PC-9 (cell line): ENCODE measurements at regions of chr10 and their contacts with region 1.

Region 1: DNA sequence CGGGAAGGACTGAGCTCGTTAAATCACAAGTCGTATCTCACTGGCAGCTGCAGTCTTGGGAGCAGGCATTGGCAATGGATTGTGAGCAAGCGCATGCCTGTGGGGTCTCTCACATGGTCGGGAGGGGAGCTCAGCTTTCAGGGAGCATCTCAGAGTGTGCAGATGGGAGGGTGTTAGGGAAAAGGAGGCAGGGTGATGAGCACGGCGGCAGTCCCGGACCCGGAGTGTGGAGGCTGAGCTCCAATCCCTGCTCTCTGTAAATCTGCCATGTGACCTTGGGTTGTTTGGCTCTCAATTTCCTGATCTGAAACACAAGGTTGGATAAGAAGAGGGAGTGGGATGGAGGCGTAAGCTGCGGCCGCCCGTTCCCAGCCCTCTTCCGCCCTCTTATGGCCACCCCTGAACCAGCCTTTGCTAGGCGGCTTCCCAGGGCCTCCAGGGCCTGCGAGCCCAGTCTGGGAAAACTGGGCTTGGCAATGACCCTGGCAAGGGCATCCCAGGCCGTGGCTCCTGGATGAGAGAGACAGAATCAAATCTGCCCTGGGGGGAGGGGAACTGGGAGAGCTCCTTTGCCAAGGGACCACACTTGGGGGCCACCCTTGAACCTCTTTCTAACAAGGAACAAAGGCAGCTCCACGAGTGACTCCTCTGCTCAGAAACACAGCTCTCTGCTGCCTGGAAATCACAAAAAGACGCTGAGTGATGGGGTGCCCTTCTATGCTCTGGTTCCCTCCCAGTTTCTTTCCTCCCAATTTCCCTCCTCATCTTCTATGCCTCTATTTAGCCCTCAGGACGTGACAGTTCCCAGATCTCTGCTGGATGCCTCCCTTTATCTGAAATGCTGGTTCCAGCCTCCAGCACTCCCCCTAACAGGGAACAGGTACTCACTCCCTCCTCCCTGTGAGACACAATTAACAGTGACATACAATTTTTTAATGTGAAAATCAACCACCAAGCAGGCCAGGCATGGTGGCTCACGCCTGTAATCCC is 41.7 kb upstream of the LOXL4 start:
- DNase-seq: peak; percentile 29 to 58
- H3K4me3 ChIP-seq: no peak overlapping the region
- H3K27ac ChIP-seq: no peak overlapping the region
- H3K4me1 ChIP-seq: peaks cover 15% of the 10 kb centered on the region
- H3K27me3 ChIP-seq: no peaks in the 10 kb centered on the region
- CTCF ChIP-seq: peak; percentile 49

Region 2: DNA sequence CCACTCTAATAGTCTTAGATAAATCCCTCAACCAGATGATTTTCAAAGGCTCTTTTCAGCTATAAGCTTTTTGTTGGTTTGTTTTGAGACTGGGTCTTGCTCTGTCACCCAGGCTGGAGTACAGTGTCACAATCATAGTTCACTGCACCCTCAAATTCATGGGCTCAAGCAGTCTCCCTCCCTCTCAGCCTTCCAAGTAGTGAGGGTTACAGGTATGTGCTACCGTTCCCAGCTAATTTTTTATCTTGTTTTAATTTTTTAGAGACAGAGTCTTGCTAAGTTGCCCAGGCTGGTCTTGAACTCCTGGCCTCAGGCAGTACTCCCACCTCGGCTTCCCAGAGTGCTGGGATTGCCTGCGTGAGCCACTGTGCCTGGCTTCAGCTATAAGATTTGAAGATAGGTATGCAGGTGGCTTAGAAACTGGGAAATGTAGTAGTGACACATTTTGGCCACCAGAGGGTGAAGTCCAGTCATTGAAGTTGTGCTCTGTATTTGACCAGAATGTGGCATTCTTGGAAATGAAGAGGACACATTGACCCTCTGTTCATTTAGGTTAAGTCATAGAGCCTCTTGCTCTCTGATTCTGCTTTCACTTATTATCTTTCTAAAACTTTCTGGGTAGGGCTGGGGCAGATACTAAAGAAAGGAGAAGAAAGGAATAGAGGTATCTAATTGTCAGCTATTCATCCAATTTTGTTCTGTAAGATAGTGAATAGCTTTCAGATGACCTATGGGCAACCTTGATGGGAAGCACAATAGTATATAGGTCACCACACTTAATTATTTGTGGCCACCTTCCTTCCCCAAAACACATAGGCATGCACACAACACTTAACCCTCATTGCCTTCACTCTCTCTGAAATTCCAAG is 139.2 kb before region 1 on chr10:
- CTCF ChIA-PET with region 1: interaction called, 4 read pairs
- POLR2A ChIA-PET with region 1: no interaction called
- intact Hi-C with region 1: loop called (anchors 1 kb)
- DNase-seq: peak; percentile 27 to 36
- H3K4me3 ChIP-seq: no peak overlapping the region
- H3K27ac ChIP-seq: no peak overlapping the region
- H3K4me1 ChIP-seq: no peaks in the 10 kb centered on the region
- H3K27me3 ChIP-seq: no peaks in the 10 kb centered on the region
- CTCF ChIP-seq: peak; percentile 77

Region 3: GRCh38 chr10:98242823-98243222 is 66.8 kb before region 1 on chr10:
- CTCF ChIA-PET with region 1: no interaction called
- POLR2A ChIA-PET with region 1: no interaction called
- intact Hi-C with region 1: loop called (anchors 1 kb)
- DNase-seq: no peak
- H3K4me3 ChIP-seq: no peak overlapping the region
- H3K27ac ChIP-seq: no peak overlapping the region
- H3K4me1 ChIP-seq: no peaks in the 10 kb centered on the region
- H3K27me3 ChIP-seq: no peaks in the 10 kb centered on the region
- CTCF ChIP-seq: peak; percentile 68

Region 4: GRCh38 chr10:98269072-98269912 is 40.4 kb before region 1 on chr10:
- CTCF ChIA-PET with region 1: interaction called, 5 read pairs
- POLR2A ChIA-PET with region 1: no interaction called
- intact Hi-C with region 1: loop called (anchors 2 kb)
- DNase-seq: peak; percentile 88 to 91
- H3K4me3 ChIP-seq: peak overlapping the region; percentile 53; the same call in 1 of the 2 replicates
- H3K27ac ChIP-seq: peak overlapping the region; percentile 68
- H3K4me1 ChIP-seq: peaks cover 51% of the 10 kb centered on the region
- H3K27me3 ChIP-seq: no peaks in the 10 kb centered on the region
- CTCF ChIP-seq: no peak

Region 5: DNA sequence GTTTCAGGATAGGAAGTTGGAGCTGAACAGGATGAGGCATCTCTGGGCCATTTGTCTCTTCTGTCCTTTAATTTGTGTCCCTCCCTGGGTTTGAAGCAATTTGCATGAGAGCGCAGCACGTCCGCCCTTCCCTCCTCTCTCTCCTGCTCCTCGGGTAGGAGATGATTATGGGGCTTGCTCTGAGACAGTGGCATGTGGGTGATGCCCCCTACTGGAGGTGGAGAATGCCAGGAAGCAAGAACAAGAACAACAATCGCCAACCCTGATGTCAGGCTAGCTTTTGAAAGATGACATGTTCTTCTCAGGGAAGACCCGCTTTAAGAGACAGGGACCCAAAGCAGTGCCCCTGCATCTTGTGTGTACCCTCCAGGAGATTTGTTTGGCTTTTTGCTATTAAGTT is 22.2 kb after region 1 on chr10:
- CTCF ChIA-PET with region 1: no interaction called
- POLR2A ChIA-PET with region 1: no interaction called
- intact Hi-C with region 1: no loop called
- DNase-seq: no peak
- H3K4me3 ChIP-seq: no peak overlapping the region
- H3K27ac ChIP-seq: no peak overlapping the region; the same call in 1 of the 2 replicates
- H3K4me1 ChIP-seq: peaks cover 29% of the 10 kb centered on the region
- H3K27me3 ChIP-seq: no peaks in the 10 kb centered on the region
- CTCF ChIP-seq: peak; percentile 39; the same call in 1 of the 2 replicates

Region 6: GRCh38 chr10:98414932-98415730 is 105.5 kb after region 1 on chr10 and contains the start of gene PYROXD2:
- CTCF ChIA-PET with region 1: no interaction called
- POLR2A ChIA-PET with region 1: no interaction called
- intact Hi-C with region 1: loop called (anchors 5 kb)
- DNase-seq: peak; percentile 81 to 86
- H3K4me3 ChIP-seq: peak within 1 kb of the TSS; percentile 78
- H3K27ac ChIP-seq: peak within 1 kb of the TSS; percentile 37; the same call in 1 of the 2 replicates
- H3K4me1 ChIP-seq: peaks cover 9% of the 10 kb centered on the region
- H3K27me3 ChIP-seq: no peaks in the 10 kb centered on the region
- CTCF ChIP-seq: no peak
- total RNA-seq, gene PYROXD2: 28.0 and 28.2 TPM in 2 replicates

Region 7: DNA sequence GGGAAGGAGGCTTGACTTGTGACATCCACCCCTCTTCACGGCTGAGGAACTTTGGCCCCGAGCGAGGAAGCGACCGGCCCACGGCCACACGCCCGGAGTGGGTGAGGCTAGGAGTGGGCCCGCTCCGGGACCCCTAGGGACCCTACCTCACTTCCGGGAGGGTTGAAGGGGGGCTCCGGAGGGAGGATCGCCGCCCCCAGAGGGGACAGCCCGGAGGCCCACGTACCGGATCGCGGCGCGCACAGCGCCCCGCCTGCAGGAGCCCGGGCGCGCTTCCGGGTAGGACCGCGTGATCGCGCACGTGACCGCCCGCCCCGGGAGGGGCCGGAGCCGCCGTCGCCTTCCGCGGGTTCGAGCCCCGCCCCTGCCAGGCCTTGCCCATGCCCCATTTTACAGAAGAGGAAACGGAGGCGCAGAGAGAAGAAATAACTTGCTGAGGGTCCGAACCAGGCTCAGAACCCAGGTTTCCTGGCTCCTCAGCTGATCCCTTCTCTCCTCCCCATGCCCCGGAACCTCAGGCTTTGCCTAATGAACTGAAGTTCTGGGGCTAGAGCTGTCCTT is 137.1 kb after region 1 on chr10 and contains the start of gene HPS1:
- CTCF ChIA-PET with region 1: no interaction called
- POLR2A ChIA-PET with region 1: no interaction called
- intact Hi-C with region 1: loop called (anchors 5 kb)
- DNase-seq: peak in 1 of 2 experiments; percentile 57
- H3K4me3 ChIP-seq: peak within 1 kb of the TSS; percentile 82
- H3K27ac ChIP-seq: peak within 1 kb of the TSS; percentile 47
- H3K4me1 ChIP-seq: 0 out of 2 replicates have a peak, but pooled peaks cover 4% of the 10 kb centered on the region
- H3K27me3 ChIP-seq: no peaks in the 10 kb centered on the region
- CTCF ChIP-seq: no peak
- total RNA-seq, gene HPS1: 43.2 and 47.0 TPM in 2 replicates

Region 8: DNA sequence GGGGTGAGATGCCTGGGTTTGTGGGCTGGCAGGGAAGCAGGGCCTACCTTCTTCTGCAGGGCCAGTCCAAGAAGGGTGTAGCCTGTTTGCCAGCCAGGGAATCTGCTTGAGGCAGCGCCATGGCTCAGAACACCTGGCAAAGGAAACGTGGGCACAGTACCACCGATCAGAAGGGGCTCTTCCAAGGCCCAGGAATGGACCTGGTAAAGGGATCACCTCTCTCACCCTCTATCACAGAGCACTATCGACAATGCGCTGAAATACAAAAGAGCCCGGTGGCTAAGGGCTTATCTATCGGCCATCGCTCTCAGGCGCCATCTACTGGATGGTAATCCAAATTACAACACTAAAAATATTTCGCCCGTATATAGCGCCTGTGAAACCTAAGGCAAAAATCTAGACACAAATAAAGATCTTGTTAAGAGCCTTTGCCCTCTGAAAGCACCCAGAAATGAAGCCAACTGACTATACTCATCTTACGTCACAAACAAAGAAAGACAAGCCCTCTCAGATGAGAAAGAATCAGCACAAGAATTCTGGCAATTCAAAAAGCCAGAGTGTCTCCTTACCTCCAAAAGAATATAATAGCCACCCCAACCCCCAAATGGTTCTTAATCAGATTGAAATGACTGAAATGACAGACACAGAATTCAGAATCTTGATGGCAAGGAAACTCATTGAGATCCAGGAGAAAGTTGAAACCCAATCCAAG is 354.8 kb after region 1 on chr10:
- CTCF ChIA-PET with region 1: no interaction called
- POLR2A ChIA-PET with region 1: no interaction called
- intact Hi-C with region 1: loop called (anchors 5 kb)
- DNase-seq: no peak
- H3K4me3 ChIP-seq: no peak overlapping the region
- H3K27ac ChIP-seq: no peak overlapping the region
- H3K4me1 ChIP-seq: no peaks in the 10 kb centered on the region
- H3K27me3 ChIP-seq: no peaks in the 10 kb centered on the region
- CTCF ChIP-seq: peak; percentile 64

Region 9: GRCh38 chr10:98943681-98944080 is 634.0 kb after region 1 on chr10:
- CTCF ChIA-PET with region 1: no interaction called
- POLR2A ChIA-PET with region 1: no interaction called
- intact Hi-C with region 1: no loop called
- DNase-seq: no peak
- H3K4me3 ChIP-seq: no peak overlapping the region
- H3K27ac ChIP-seq: no peak overlapping the region
- H3K4me1 ChIP-seq: no peaks in the 10 kb centered on the region
- H3K27me3 ChIP-seq: no peaks in the 10 kb centered on the region
- CTCF ChIP-seq: no peak